Activated CD4-positive, alpha-beta T cell treated with anti-CD3 and anti-CD28 coated beads, Interleukin-2, amount 10 ng/mL, durations not matched to agents 7 days and 5 days (primary cell): ENCODE measurements at regions of chr3 and their contacts with region 1.

Region 1: DNA sequence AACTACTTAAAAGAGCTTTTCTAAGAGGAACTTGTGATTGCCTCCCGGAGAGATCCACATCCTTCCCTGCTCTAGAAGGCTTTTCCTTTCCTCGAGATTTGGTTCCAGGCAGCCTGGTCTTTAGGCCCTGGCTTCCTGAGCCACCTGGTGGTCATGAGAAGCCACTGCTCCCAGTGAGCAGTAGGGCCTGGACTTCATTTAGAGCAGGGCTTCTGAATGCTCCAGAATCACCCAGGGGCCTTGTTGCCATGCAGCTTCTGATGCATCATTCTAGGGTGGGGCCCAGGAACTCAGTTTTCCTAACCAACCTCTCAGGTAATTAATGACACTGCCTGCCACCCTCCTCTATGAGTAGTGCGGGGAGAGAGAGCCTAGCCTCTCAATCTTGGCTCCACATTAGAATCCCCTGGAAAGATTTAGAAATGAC is 29.6 kb downstream of the PSMD6 start:
- DNase-seq: peak; percentile 60
- H3K4me3 Mint-ChIP-seq: no peak overlapping the region
- H3K27ac Mint-ChIP-seq: peak overlapping the region; percentile 31
- H3K4me1 Mint-ChIP-seq: peaks cover 45% of the 10 kb centered on the region
- H3K27me3 Mint-ChIP-seq: no peaks in the 10 kb centered on the region

Region 2: GRCh38 chr3:63661248-63661647 is 332.4 kb before region 1 on chr3:
- CTCF ChIA-PET with region 1: no interaction called
- POLR2A ChIA-PET with region 1: no interaction called
- DNase-seq: no peak
- H3K4me3 Mint-ChIP-seq: no peak overlapping the region
- H3K27ac Mint-ChIP-seq: no peak overlapping the region
- H3K4me1 Mint-ChIP-seq: no peaks in the 10 kb centered on the region
- H3K27me3 Mint-ChIP-seq: no peaks in the 10 kb centered on the region

Region 3: DNA sequence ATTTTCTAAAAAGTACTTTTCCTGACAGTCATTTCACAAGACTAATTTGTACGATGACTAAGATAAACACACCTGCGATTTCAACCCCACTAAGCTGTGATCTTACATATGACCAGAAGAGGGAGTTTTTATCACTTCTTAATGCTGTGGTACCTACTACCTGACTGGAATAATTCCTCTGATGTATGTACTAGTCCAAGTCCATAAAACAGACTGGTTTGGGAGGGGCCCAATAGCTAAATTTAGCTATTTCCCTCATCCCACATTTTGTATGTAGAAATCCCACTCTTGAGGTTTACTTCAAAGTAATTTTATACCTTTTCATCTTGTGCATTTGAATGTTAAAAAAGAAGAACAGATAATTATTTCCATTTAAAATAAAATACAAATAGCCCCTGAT is 31.8 kb before region 1 on chr3:
- CTCF ChIA-PET with region 1: interaction called, 11 read pairs
- POLR2A ChIA-PET with region 1: no interaction called
- DNase-seq: peak; percentile 34
- H3K4me3 Mint-ChIP-seq: no peak overlapping the region
- H3K27ac Mint-ChIP-seq: no peak overlapping the region
- H3K4me1 Mint-ChIP-seq: peaks cover 54% of the 10 kb centered on the region
- H3K27me3 Mint-ChIP-seq: no peaks in the 10 kb centered on the region

Region 4: DNA sequence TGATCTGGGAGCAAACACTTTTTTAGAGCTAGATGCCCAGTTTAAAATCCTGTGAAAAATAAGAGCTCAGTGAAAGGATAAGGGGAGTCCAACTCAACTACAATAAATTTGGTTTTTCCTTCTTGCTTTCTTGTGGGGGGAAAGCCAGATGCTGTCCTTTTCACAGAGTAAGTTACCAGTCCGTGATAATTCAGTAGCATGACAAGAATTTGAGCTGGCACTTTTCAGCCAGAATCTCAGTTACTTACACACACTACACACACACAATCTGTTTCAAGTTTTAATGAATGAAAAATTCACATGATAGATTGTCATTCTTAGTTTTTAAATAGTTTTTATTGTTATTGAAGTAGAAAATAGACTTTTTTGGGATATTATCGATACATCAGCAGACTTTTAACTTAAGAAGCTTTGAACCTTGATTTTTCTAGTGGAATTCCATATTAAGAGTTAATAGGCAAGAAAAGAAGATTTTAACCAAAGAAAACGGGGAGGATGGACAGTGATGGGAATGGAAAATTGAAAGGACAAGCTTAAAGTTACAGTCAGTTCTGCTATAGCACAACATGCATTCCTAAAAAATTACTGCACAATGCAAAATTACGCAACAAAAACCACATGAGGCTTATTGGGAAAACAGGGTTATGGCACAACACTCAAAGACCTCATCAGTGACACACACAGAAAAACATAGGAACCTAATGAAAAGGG is 17.4 kb before region 1 on chr3:
- CTCF ChIA-PET with region 1: interaction called, 13 read pairs
- POLR2A ChIA-PET with region 1: interaction called, 3 read pairs
- DNase-seq: no peak
- H3K4me3 Mint-ChIP-seq: no peak overlapping the region
- H3K27ac Mint-ChIP-seq: peak overlapping the region; percentile 63
- H3K4me1 Mint-ChIP-seq: peaks cover 91% of the 10 kb centered on the region
- H3K27me3 Mint-ChIP-seq: no peaks in the 10 kb centered on the region